Activated B cell treated with CpG ODN at 0.5 μM for 24 hours (primary cell): ENCODE measurements at regions of chr11 and their contacts with region 1.

Region 1: DNA sequence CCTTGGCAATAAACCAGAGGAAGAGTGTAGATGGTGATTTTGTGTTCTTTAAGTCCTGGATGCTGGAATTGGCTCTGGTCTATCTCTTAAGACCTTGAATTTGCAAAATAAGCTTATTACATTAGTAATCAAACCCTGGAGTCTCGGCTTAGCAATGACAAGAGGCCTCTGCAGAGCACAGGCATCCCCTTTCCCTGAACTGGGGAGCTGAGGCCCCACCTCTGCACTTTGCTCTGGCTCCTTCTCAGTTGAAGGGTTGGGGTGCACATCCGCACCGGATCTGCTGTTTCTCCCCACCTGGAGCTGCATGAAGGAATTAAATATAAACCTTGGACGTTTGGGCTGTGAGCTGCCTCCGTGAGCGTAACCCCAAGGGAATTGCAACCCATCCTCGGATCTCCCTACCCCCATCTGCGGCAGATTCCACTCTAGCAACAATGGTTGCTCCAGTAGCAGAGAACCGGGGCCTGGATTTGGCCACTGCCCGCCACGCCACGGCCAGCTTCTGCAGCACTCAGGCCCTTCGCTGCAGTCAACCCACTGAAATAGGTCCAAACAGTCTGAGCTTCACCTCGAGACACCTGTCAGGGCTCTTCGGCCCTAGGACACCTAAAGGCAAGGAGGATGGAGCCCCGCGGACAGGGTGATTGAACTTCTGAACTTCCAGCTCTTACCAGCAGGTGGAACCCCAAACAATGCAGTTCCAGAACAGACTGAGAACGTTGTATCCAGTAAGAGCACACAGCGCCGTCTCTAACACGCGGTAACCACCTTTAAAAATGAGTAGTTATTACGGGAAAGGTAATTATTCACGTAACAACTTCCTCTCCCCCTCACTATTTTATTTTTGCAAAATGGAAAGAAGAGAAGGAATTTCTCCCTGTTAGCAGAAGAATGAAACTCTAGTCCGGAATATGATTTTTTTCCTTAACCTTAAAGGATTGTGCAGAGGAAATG is 54.8 kb upstream of the CAPRIN1 start:
- DNase-seq: peak; percentile 41
- ATAC-seq: peak; percentile 98
- H3K4me3 Mint-ChIP-seq: peak overlapping the region; percentile 36
- H3K27ac Mint-ChIP-seq: no peak overlapping the region
- H3K4me1 Mint-ChIP-seq: peaks cover 10% of the 10 kb centered on the region
- H3K27me3 Mint-ChIP-seq: peaks cover 19% of the 10 kb centered on the region
- CTCF ChIP-seq: peak; percentile 40

Region 2: GRCh38 chr11:33412241-33412640 is 584.5 kb before region 1 on chr11:
- CTCF ChIA-PET with region 1: no interaction called
- POLR2A ChIA-PET with region 1: no interaction called
- intact Hi-C with region 1: no loop called
- DNase-seq: no peak
- ATAC-seq: no peak
- H3K4me3 Mint-ChIP-seq: no peak overlapping the region
- H3K27ac Mint-ChIP-seq: no peak overlapping the region
- H3K4me1 Mint-ChIP-seq: no peaks in the 10 kb centered on the region
- H3K27me3 Mint-ChIP-seq: peaks cover 13% of the 10 kb centered on the region
- CTCF ChIP-seq: no peak

Region 3: DNA sequence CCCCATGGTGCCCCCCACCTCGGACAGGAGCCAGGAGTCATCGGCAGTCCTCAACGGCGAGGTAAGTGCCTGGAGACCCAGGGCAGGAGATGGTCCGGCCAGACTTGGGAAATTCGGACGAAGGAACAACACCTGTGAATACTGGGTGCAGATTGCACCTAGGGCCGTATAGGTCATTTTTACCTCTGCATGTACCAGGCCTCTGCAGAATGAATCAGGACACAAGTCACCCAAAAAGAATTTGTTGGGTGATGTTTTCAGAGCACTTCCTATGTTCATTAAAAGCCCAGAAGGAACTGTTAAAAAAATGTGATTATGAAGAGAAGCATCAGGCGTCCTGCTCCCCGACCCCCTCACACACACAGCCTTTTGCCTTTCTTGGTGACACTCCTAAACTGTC is 390.0 kb before region 1 on chr11:
- CTCF ChIA-PET with region 1: no interaction called
- POLR2A ChIA-PET with region 1: no interaction called
- intact Hi-C with region 1: no loop called
- DNase-seq: no peak
- ATAC-seq: no peak
- H3K4me3 Mint-ChIP-seq: no peak overlapping the region
- H3K27ac Mint-ChIP-seq: no peak overlapping the region
- H3K4me1 Mint-ChIP-seq: no peaks in the 10 kb centered on the region
- H3K27me3 Mint-ChIP-seq: peaks cover 8% of the 10 kb centered on the region
- CTCF ChIP-seq: no peak

Region 4: GRCh38 chr11:34030387-34030786 is 33.6 kb after region 1 on chr11:
- CTCF ChIA-PET with region 1: no interaction called
- POLR2A ChIA-PET with region 1: no interaction called
- intact Hi-C with region 1: no loop called
- DNase-seq: no peak
- ATAC-seq: no peak
- H3K4me3 Mint-ChIP-seq: no peak overlapping the region
- H3K27ac Mint-ChIP-seq: no peak overlapping the region
- H3K4me1 Mint-ChIP-seq: no peaks in the 10 kb centered on the region
- H3K27me3 Mint-ChIP-seq: no peaks in the 10 kb centered on the region
- CTCF ChIP-seq: no peak

Region 5: GRCh38 chr11:34068111-34068510 is 71.3 kb after region 1 on chr11:
- CTCF ChIA-PET with region 1: interaction called, 3 read pairs
- POLR2A ChIA-PET with region 1: no interaction called
- intact Hi-C with region 1: loop called (anchors 5 kb)
- DNase-seq: no peak
- ATAC-seq: peak; percentile 47
- H3K4me3 Mint-ChIP-seq: no peak overlapping the region
- H3K27ac Mint-ChIP-seq: peak overlapping the region; percentile 70
- H3K4me1 Mint-ChIP-seq: peaks cover 46% of the 10 kb centered on the region
- H3K27me3 Mint-ChIP-seq: no peaks in the 10 kb centered on the region
- CTCF ChIP-seq: no peak

Region 6: DNA sequence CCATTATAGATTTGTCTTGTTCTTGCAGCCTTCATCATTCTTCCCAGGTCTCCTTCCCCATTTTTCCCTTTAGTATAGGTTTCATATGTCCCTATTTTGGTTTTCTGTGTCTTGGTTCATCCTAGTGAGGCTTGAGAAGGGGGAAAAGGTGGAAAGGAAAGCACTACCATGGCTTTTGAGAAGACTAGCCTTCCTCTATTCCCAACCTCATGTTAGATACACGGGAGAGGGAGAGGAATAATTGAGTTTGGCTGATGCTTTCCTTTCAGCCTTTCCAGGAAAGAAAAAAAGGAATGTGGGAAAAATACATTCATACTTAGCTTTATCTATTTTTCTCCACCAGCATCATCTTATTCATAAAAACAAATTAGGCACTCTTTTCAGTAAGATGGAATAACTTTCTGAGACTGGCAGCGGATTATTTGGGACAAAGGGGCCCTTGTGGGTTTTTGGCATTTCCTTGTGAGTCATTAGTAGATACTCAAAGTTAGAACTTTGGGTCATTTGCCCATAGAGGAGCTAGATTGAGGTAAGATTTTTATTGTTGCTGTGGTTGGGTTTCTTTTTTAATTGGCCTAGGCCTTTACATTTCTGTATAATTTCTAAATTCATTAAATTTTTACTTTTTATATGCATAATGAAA is 78.5 kb after region 1 on chr11:
- CTCF ChIA-PET with region 1: interaction called, 14 read pairs
- POLR2A ChIA-PET with region 1: no interaction called
- intact Hi-C with region 1: no loop called
- DNase-seq: no peak
- ATAC-seq: no peak
- H3K4me3 Mint-ChIP-seq: no peak overlapping the region
- H3K27ac Mint-ChIP-seq: peak overlapping the region; percentile 32
- H3K4me1 Mint-ChIP-seq: peaks cover 6% of the 10 kb centered on the region
- H3K27me3 Mint-ChIP-seq: no peaks in the 10 kb centered on the region
- CTCF ChIP-seq: no peak

Region 7: GRCh38 chr11:34105079-34105956 is 108.5 kb after region 1 on chr11 and contains the start of gene NAT10:
- CTCF ChIA-PET with region 1: interaction called, 3 read pairs
- POLR2A ChIA-PET with region 1: interaction called, 6 read pairs
- intact Hi-C with region 1: loop called (anchors 1 kb)
- DNase-seq: peak; percentile 91
- ATAC-seq: peak; percentile 92
- H3K4me3 Mint-ChIP-seq: peak within 1 kb of the TSS; percentile 97
- H3K27ac Mint-ChIP-seq: peak within 1 kb of the TSS; percentile 98
- H3K4me1 Mint-ChIP-seq: peaks cover 41% of the 10 kb centered on the region
- H3K27me3 Mint-ChIP-seq: peaks cover 2% of the 10 kb centered on the region
- CTCF ChIP-seq: no peak
- total RNA-seq, gene NAT10: 107 and 120 TPM in 2 replicates

Region 8: GRCh38 chr11:34149786-34150185 is 153.0 kb after region 1 on chr11:
- CTCF ChIA-PET with region 1: no interaction called
- POLR2A ChIA-PET with region 1: no interaction called
- intact Hi-C with region 1: loop called (anchors 2 kb)
- DNase-seq: no peak
- ATAC-seq: no peak
- H3K4me3 Mint-ChIP-seq: no peak overlapping the region
- H3K27ac Mint-ChIP-seq: no peak overlapping the region
- H3K4me1 Mint-ChIP-seq: peaks cover 42% of the 10 kb centered on the region
- H3K27me3 Mint-ChIP-seq: no peaks in the 10 kb centered on the region
- CTCF ChIP-seq: no peak

Region 9: DNA sequence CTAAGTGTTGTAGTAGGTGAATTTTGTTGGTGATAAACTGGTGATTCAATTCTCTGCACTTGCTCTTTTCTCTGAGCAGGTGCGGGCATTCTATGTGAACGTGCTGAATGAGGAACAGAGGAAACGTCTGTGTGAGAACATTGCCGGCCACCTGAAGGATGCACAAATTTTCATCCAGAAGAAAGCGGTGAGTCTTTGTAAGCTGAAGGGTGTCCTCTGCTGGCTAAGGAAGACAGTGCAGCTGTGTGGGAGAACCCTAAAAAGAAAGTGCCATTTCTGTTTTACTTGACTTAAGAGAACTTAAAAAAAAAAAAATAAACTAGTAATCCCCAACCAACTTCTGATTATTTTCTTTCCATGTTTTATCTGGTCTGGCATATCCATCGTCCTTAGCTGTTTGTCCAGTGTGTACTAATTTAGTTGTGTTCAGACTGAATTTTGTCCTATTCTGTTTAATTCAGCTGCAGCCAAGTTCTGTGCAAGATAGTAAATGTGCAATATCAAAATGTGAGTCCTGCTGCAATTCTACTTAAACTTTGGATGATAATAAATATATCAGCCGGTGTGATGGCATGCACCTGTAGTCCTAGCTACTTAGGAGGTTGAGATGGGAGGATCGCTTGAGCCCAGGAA is 471.5 kb after region 1 on chr11:
- CTCF ChIA-PET with region 1: interaction called, 7 read pairs
- POLR2A ChIA-PET with region 1: no interaction called
- intact Hi-C with region 1: loop called (anchors 1 kb)
- DNase-seq: no peak
- ATAC-seq: peak; percentile 66
- H3K4me3 Mint-ChIP-seq: no peak overlapping the region
- H3K27ac Mint-ChIP-seq: no peak overlapping the region
- H3K4me1 Mint-ChIP-seq: no peaks in the 10 kb centered on the region
- H3K27me3 Mint-ChIP-seq: no peaks in the 10 kb centered on the region
- CTCF ChIP-seq: no peak

Region 10: GRCh38 chr11:34492806-34493414 is 496.1 kb after region 1 on chr11:
- CTCF ChIA-PET with region 1: interaction called, 6 read pairs
- POLR2A ChIA-PET with region 1: no interaction called
- intact Hi-C with region 1: loop called (anchors 1 kb)
- DNase-seq: no peak
- ATAC-seq: no peak
- H3K4me3 Mint-ChIP-seq: no peak overlapping the region
- H3K27ac Mint-ChIP-seq: no peak overlapping the region
- H3K4me1 Mint-ChIP-seq: no peaks in the 10 kb centered on the region
- H3K27me3 Mint-ChIP-seq: peaks cover 5% of the 10 kb centered on the region
- CTCF ChIP-seq: peak; percentile 65